Esophagus squamous epithelium (tissue), 5 donors: ENCODE measurements at regions of chr1 and their contacts with region 1.

Region 1: DNA sequence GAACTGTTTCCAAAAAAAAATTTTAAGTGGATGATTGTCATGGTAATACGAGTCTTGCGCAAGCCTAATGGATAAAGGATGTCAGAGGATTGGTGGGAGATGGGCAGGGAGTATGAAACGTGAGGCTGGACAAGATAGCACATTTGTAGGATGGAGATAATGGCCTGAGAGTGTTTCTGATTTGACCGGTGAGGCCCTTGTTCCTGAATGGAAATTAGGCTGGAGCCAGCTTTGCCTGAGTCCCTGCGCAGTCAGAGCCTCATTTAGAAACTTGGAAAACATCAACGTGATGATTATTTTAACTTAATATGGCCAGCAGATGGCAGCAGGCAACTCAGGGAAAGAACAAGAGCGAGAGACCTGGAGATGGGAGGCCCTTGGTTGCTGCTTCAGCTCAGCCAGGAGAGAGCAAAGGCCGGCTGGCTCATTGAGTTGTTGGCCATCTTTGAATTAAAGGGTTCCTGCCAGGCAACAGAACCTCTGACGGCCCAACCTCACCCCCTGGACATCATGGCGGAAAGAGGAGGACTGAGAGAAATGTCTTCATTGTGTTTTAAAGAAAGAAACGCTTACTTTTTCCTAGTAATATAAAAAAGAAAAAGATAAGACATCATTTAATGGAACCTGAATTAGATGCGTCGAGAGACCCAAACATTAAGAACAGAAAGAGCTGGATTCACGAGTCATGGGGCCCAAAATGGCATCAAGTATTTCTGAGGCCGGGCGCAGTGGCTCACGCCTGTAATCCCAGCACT is 80.3 kb downstream of the SELENOF start:
- DNase-seq: peak; percentile 2
- H3K4me3 ChIP-seq: no peak overlapping the region
- H3K27ac ChIP-seq: no peak overlapping the region
- H3K4me1 ChIP-seq: peaks cover 0 to 2% (median 0%) of the 10 kb centered on the region in 3 donors
- H3K27me3 ChIP-seq: no peaks in the 10 kb centered on the region
- CTCF ChIP-seq: peak; percentile 22 to 66 (median 56)
- POLR2A ChIP-seq: no peak

Region 2: DNA sequence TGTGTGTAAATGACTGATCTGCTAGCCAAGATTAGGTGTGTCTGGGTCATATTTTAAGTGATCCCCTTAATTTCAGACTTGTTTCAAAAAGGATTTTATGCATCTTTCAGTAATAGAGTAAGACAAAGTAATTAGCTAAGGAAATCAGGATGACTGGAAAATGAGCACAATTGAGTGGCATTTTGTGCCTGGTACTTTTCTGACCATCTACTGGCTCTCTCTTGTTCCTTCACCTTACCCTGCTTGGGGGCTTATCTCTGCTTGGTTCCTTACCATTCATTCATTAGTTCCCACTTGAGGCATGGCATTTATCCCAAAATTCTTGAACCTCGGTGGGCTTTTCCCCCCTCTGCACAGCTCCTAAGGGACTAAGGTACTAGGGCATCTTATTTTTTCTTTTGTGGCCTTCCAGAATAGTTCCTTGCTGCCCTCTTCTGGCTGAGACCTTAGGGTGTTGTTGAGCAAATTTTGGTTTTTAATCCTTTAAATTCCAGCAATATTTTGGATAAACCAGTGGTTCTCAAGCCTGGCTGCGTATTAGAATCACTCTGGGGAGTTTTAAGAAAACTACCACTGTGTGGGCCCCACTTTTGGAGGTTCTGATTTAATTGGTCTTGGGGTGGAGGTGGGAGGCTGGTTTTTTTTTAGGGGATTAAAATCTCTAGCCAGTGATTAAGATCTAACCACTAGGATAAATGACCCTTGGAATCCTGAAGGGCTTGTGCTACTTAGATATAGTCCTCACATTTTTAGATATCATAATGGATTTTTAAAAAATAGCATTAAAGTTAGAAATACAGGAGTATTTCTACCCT is 131.6 kb after region 1 on chr1:
- intact Hi-C with region 1: loop called (anchors 5 kb)
- DNase-seq: no peak
- H3K4me3 ChIP-seq: no peak overlapping the region
- H3K27ac ChIP-seq: no peak overlapping the region
- H3K4me1 ChIP-seq: no peaks in the 10 kb centered on the region
- H3K27me3 ChIP-seq: no peaks in the 10 kb centered on the region
- CTCF ChIP-seq: peak; percentile 28 to 61 (median 52)
- POLR2A ChIP-seq: no peak

Region 3: DNA sequence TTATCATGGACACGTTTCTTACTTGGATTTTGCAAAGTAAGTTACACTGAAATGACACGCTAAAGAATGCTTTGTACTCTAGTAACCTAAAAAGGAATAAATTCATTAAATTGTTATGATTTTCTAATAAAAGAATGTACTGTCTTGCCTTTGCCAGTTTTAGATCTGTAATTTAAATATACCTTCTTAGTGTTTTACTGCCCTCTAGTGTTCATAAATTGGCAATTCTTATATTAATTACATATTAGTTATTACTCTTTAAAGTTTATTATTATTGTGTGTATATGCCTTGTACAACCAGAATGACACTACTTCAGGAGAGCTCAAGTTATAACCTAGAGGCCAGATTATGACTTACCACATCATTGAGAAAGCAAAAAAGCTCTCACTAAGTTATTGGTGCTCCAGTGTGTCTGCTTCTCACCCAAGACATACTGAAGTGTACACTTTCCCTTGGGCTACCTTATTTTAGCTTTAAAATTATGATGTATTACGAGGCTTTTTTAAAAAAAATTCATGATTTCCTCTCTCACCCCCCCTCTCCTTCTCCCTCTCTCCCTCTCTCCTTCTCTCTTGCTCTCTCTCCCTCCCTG is 250.7 kb after region 1 on chr1:
- intact Hi-C with region 1: loop called (anchors 10 kb)
- DNase-seq: no peak
- H3K4me3 ChIP-seq: no peak overlapping the region
- H3K27ac ChIP-seq: no peak overlapping the region
- H3K4me1 ChIP-seq: no peaks in the 10 kb centered on the region
- H3K27me3 ChIP-seq: no peaks in the 10 kb centered on the region
- CTCF ChIP-seq: peak in 4 of 6 experiments; percentile 25 to 62 (median 47)
- POLR2A ChIP-seq: no peak

Region 4: DNA sequence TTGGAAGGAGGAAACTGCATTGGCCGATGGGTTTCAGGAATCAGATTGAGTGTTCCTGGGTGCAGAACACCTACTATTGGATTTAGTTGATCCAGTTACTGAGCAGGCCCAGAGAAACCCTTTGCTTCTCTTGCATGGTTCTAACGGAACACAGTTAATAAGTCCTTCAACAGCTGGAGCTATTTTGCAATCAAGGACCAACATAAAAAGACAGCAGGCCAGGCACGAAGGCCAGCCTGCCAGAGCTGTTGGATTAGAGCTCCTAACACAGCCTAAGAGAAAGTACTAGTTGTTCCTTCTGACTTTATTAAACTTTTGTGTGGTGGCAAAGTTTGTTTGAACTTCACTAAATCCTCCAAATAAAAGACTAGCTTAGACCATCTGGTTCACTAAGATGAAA is 347.0 kb after region 1 on chr1:
- intact Hi-C with region 1: no loop called
- DNase-seq: no peak
- H3K4me3 ChIP-seq: no peak overlapping the region
- H3K27ac ChIP-seq: peak overlapping the region in 1 of 4 donors; percentile 29
- H3K4me1 ChIP-seq: no peaks in the 10 kb centered on the region
- H3K27me3 ChIP-seq: no peaks in the 10 kb centered on the region
- CTCF ChIP-seq: no peak
- POLR2A ChIP-seq: no peak

Region 5: GRCh38 chr1:87348341-87348999 is 514.8 kb after region 1 on chr1:
- intact Hi-C with region 1: no loop called
- DNase-seq: no peak
- H3K4me3 ChIP-seq: no peak overlapping the region
- H3K27ac ChIP-seq: peak overlapping the region in 3 of 4 donors; percentile 6 to 23 (median 9)
- H3K4me1 ChIP-seq: peaks cover 0 to 26% (median 11%) of the 10 kb centered on the region in 3 donors
- H3K27me3 ChIP-seq: no peaks in the 10 kb centered on the region
- CTCF ChIP-seq: no peak
- POLR2A ChIP-seq: no peak